ENCODE measurements at regions of chr16 and their contacts with region 1.

Region 1: DNA sequence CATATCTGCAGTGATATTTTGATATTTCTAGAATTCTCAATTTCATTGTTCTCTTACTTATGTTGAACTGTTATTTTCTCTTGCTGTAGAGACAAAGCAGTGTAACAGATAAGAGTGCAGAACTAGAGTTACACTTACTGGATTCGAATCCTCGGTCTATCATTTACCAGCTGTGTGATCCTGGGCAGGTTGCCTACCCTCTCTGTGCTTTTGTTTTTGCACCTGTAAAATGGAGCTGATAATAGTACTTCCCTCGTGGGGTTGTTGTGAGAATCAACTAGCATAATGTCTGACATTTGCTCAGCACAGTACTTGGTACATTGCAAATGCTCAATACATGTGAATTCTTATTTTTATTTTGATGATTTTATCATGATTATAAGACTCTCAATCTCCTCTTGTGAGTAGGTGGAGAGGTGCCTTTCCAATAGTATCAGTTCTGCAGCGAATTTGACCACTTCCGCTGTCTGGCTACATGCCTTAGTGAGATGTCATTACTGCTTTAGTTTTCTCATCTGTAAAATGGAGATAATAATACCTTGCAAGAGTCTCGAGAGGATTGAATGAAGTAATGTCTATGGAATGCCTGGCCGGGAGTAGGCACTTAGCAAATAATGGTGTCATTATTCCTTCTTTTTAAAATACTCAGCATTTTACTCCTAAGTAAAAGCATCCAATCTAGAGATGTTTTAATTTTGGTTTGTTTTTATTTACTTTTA is 312.2 kb upstream of the MAF start:
- DNase-seq: no peak
- ATAC-seq: no peak
- H3K4me3 ChIP-seq: no peak overlapping the region
- H3K27ac ChIP-seq: no peak overlapping the region
- H3K4me1 ChIP-seq: no peaks in the 10 kb centered on the region
- H3K27me3 ChIP-seq: no peaks in the 10 kb centered on the region
- CTCF ChIP-seq: no peak
- EP300 ChIP-seq: no peak
- POLR2A ChIP-seq: no peak
- RAD21 ChIP-seq: no peak

Region 2: GRCh38 chr16:79801641-79802040 is 111.1 kb before region 1 on chr16:
- CTCF ChIA-PET with region 1: no interaction called
- POLR2A ChIA-PET with region 1: no interaction called
- RAD21 ChIA-PET with region 1: no interaction called
- SMC1A ChIA-PET with region 1: no interaction called
- in situ Hi-C with region 1: no loop called
- intact Hi-C with region 1: no loop called
- DNase-seq: no peak
- ATAC-seq: no peak
- H3K4me3 ChIP-seq: no peak overlapping the region
- H3K27ac ChIP-seq: no peak overlapping the region
- H3K4me1 ChIP-seq: no peaks in the 10 kb centered on the region
- H3K27me3 ChIP-seq: no peaks in the 10 kb centered on the region
- CTCF ChIP-seq: no peak
- EP300 ChIP-seq: no peak
- POLR2A ChIP-seq: no peak
- RAD21 ChIP-seq: no peak

Region 3: GRCh38 chr16:79838496-79839259 is 74.1 kb before region 1 on chr16:
- CTCF ChIA-PET with region 1: no interaction called
- POLR2A ChIA-PET with region 1: no interaction called
- RAD21 ChIA-PET with region 1: no interaction called
- SMC1A ChIA-PET with region 1: no interaction called
- in situ Hi-C with region 1: no loop called
- intact Hi-C with region 1: no loop called
- DNase-seq: no peak
- ATAC-seq: no peak
- H3K4me3 ChIP-seq: no peak overlapping the region
- H3K27ac ChIP-seq: no peak overlapping the region
- H3K4me1 ChIP-seq: no peaks in the 10 kb centered on the region
- H3K27me3 ChIP-seq: no peaks in the 10 kb centered on the region
- CTCF ChIP-seq: no peak
- EP300 ChIP-seq: no peak
- POLR2A ChIP-seq: no peak
- RAD21 ChIP-seq: no peak

Region 4: GRCh38 chr16:79970551-79971236 is 57.9 kb after region 1 on chr16:
- CTCF ChIA-PET with region 1: no interaction called
- POLR2A ChIA-PET with region 1: no interaction called
- RAD21 ChIA-PET with region 1: no interaction called
- SMC1A ChIA-PET with region 1: no interaction called
- in situ Hi-C with region 1: no loop called
- intact Hi-C with region 1: loop called (anchors 10 kb)
- DNase-seq: no peak
- ATAC-seq: no peak
- H3K4me3 ChIP-seq: no peak overlapping the region
- H3K27ac ChIP-seq: no peak overlapping the region
- H3K4me1 ChIP-seq: no peaks in the 10 kb centered on the region
- H3K27me3 ChIP-seq: no peaks in the 10 kb centered on the region
- CTCF ChIP-seq: no peak
- EP300 ChIP-seq: no peak
- POLR2A ChIP-seq: no peak
- RAD21 ChIP-seq: no peak